OCI-LY7 (cell line): ENCODE measurements at regions of chr5 and their contacts with region 1.

Region 1: GRCh38 chr5:107253246-107253645 is 417.5 kb downstream of the EFNA5 start:
- DNase-seq: no peak
- H3K4me3 ChIP-seq: no peak overlapping the region
- H3K27ac ChIP-seq: no peak overlapping the region
- H3K4me1 ChIP-seq: peaks cover 8% of the 10 kb centered on the region
- CTCF ChIP-seq: no peak

Region 2: GRCh38 chr5:106730912-106731311 is 522.3 kb before region 1 on chr5:
- CTCF ChIA-PET with region 1: no interaction called
- POLR2A ChIA-PET with region 1: no interaction called
- intact Hi-C with region 1: no loop called
- DNase-seq: no peak
- H3K4me3 ChIP-seq: no peak overlapping the region
- H3K27ac ChIP-seq: no peak overlapping the region
- H3K4me1 ChIP-seq: no peaks in the 10 kb centered on the region
- CTCF ChIP-seq: no peak

Region 3: DNA sequence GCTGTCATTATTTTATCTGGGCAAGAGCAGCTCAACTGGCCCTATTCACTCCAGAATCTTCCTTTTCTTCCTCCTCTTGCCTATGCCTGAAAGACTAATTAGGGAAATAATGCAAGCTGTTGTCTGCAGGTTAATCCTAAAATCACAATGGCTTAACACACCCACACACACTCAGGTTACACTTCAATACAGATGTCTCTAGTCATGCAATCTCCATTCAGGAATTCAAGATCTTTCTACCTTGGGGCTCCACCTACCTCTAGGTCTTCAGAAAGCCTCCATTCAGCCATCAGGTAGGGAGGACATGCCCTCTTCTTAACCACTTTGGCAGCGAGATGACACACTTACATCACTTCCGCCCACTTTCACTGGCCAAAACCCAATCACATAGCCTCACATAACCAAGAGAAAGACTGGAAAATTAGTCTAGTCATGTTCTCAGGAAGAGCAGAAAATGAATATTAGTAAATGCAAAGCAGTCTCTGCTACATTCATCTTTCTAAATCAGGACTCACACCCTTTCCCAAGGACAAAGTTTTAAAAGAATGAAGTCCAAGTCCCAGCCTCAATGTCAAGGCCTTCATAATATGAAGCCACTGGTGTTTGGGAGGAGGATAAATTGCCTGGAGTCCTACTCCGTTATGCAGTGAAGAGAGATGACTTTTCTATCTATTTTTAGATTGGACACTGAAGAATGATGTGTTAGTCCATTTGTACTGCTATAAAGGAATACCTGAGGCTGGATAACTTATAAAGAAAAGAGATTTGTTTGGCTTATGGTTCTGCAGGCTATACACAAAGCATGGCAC is 10.6 kb before region 1 on chr5:
- CTCF ChIA-PET with region 1: no interaction called
- POLR2A ChIA-PET with region 1: interaction called, 11 read pairs
- intact Hi-C with region 1: no loop called
- DNase-seq: no peak
- H3K4me3 ChIP-seq: no peak overlapping the region
- H3K27ac ChIP-seq: no peak overlapping the region
- H3K4me1 ChIP-seq: no peaks in the 10 kb centered on the region
- CTCF ChIP-seq: no peak

Region 4: GRCh38 chr5:107365320-107366109 is 112.3 kb after region 1 on chr5:
- CTCF ChIA-PET with region 1: no interaction called
- POLR2A ChIA-PET with region 1: no interaction called
- intact Hi-C with region 1: no loop called
- DNase-seq: peak; percentile 40
- H3K4me3 ChIP-seq: no peak overlapping the region
- H3K27ac ChIP-seq: no peak overlapping the region
- H3K4me1 ChIP-seq: peaks cover 33% of the 10 kb centered on the region
- CTCF ChIP-seq: no peak